Cardiac septum (tissue), 1 donor: ENCODE measurements at regions of chr9 and their contacts with region 1.

Region 1: DNA sequence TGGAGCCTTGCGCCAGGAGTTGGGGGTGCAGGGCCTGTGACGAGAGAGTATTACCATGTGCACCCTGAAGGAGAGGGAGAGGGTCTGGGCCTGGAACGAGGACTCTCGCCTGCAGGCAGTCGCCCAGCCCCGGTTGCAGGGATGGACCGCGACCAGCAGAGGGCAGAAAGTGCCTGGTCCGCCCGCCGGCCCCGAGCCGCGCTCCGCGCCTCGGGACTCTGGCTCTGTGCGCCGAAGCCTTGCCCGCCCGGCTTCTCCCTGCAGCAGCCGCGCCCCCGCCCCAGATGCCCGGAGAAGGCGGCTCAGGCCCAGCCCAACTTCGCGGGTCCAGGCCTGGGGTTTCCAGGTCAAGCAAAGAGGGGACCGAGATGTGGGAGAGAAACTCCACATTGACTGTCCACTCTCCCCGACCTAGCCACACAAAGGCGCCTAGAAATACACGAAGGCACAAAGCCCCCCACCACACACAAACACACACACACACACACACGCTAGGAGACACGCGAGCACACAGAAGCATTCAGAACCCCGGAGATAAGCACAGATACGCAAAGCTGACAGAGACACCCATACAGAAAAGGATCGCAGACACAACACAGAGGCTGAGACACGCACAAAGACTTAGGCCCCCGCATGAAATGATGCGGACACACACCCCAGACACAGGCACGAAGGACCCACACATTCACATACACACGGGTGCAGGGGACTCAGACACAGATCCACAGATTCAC is 2.0 kb upstream of the LMX1B start:
- DNase-seq: peak; percentile 83

Region 2: DNA sequence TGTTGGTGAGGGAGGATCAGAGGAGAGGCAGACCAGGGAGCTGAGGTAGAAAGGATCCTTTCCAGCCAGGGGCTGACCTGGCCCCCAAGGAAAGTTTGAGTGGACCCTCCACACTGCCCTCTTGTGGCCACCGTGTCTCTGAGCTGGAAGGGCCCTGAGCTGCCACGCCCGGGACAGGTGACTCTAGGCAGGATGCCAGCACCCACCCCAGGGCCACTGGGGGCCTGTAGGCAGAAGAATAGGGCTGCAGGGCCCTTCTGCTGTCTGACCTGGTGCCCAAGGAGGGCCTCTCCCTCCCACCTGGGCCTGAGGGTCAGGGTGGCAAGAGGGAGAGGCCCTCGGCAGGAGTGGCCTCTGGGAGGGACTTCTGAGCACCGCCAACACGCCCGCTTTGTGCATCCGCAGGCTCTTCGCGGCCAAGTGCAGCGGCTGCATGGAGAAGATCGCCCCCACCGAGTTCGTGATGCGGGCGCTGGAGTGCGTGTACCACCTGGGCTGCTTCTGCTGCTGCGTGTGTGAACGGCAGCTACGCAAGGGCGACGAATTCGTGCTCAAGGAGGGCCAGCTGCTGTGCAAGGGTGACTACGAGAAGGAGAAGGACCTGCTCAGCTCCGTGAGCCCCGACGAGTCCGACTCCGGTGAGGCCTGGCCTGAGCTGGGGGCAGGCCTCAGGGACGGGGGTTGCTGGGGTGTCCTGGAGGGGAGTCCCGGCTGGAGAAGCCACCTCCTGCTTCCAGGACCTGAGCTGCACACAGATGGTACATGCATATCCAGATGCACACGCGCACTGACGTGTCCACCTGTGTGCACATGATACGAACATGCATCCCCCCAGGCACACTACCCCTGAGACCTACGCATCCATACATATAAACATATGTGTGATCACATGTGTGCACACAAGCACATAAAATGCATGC is 78.9 kb after region 1 on chr9:
- intact Hi-C with region 1: loop called (anchors 2 kb)
- DNase-seq: no peak

Region 3: GRCh38 chr9:126781186-126782052 is 169.7 kb after region 1 on chr9:
- intact Hi-C with region 1: loop called (anchors 2 kb)
- DNase-seq: peak; percentile 85